Mammary epithelial cell (primary cell): ENCODE measurements at regions of chr7 and their contacts with region 1.

Region 1: DNA sequence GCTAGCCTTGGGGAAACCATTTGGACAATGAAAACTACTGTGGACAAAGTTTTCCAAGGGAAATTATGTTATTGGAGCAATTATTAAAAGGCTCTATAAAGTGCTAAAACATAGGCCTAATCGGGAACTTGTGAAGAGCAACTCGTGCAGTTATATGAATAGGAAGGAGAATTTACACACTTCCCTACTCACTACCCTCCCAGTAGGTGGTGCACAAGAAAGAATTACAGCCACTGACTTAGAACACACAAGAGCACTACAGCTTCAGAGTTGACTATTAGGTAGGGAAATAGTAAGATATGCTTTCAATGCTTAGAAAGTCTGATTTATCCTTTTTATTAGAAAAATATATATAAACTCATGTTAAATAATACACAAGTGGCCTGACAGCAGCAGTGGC is 47.2 kb downstream of the GSAP start:
- DNase-seq: no peak
- H3K4me3 ChIP-seq: no peak overlapping the region
- H3K27ac ChIP-seq: no peak overlapping the region
- H3K4me1 ChIP-seq: no peaks in the 10 kb centered on the region
- H3K27me3 ChIP-seq: no peaks in the 10 kb centered on the region
- CTCF ChIP-seq: peak in 1 of 2 donors; percentile 42

Region 2: GRCh38 chr7:77415823-77416622 is 47.0 kb after region 1 on chr7 and contains the start of gene GSAP:
- CTCF ChIA-PET with region 1: no interaction called
- dilution Hi-C with region 1: no loop called
- in situ Hi-C with region 1: no loop called
- intact Hi-C with region 1: loop called (anchors 1 kb)
- DNase-seq: peak; percentile 61
- H3K4me3 ChIP-seq: peak within 1 kb of the TSS; percentile 53 to 70 (median 61)
- H3K27ac ChIP-seq: peak within 1 kb of the TSS; percentile 31
- H3K4me1 ChIP-seq: peaks cover 29% of the 10 kb centered on the region
- H3K27me3 ChIP-seq: no peaks in the 10 kb centered on the region
- CTCF ChIP-seq: no peak
- total RNA-seq, gene GSAP: 7.9 to 10.3 TPM